Breast epithelium (tissue), 4 donors: ENCODE measurements at regions of chr17 and their contacts with region 1.

Region 1: GRCh38 chr17:16407911-16408588 is 7.3 kb upstream of the TRPV2 start:
- DNase-seq: peak in 1 of 2 donors; percentile 59
- H3K4me3 ChIP-seq: peak overlapping the region; percentile 4 to 73 (median 61)
- H3K27ac ChIP-seq: peak overlapping the region; percentile 76 to 79
- H3K4me1 ChIP-seq: no peaks in the 10 kb centered on the region
- H3K27me3 ChIP-seq: no peaks in the 10 kb centered on the region
- CTCF ChIP-seq: no peak
- POLR2A ChIP-seq: no peak

Region 2: GRCh38 chr17:16106161-16106891 is 301.7 kb before region 1 on chr17:
- intact Hi-C with region 1: no loop called
- DNase-seq: no peak
- H3K4me3 ChIP-seq: no peak overlapping the region
- H3K27ac ChIP-seq: peak overlapping the region; percentile 62 to 71
- H3K4me1 ChIP-seq: no peaks in the 10 kb centered on the region
- H3K27me3 ChIP-seq: no peaks in the 10 kb centered on the region
- CTCF ChIP-seq: no peak
- POLR2A ChIP-seq: no peak

Region 3: DNA sequence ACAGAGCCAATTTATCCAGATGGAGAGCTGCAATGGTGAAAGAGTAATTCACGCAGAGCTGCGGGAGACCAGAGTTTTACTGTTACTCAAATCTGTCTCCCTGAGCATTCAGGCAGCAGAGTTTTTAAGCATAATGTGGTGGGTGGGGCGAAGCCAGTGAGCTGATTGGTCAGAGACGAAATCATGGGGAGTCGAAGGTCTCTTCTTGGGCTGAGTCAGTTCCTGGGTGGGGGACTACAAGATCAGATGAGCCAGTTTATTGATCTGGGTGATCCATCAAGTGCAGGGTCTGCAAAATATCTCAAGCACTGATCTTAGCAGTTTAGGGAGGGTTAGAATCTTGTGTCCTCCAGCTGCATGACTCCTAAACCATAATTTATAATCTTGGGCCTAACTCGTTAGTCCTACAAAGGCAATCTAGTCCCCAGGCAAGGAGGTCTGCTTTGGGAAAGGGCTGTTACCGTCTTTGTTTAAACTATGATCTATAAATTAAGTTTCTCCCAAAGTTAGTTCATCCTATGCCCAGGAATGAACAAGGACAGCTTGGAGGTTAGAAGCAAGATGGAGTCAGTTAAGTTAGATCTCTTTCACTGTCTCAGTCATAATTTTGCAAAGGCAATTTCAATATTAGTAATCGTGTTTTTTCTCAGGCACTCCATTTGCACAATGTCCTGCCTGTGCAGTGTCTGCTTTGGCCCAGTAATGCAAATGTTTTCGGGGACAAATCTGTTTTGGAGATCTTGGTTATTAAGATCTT is 164.1 kb before region 1 on chr17:
- intact Hi-C with region 1: no loop called
- DNase-seq: no peak
- H3K4me3 ChIP-seq: no peak overlapping the region
- H3K27ac ChIP-seq: no peak overlapping the region
- H3K4me1 ChIP-seq: no peaks in the 10 kb centered on the region
- H3K27me3 ChIP-seq: no peaks in the 10 kb centered on the region
- CTCF ChIP-seq: no peak
- POLR2A ChIP-seq: no peak

Region 4: GRCh38 chr17:16342979-16343378 is 65.1 kb before region 1 on chr17:
- intact Hi-C with region 1: no loop called
- DNase-seq: no peak
- H3K4me3 ChIP-seq: no peak overlapping the region
- H3K27ac ChIP-seq: no peak overlapping the region
- H3K4me1 ChIP-seq: no peaks in the 10 kb centered on the region
- H3K27me3 ChIP-seq: no peaks in the 10 kb centered on the region
- CTCF ChIP-seq: no peak
- POLR2A ChIP-seq: no peak

Region 5: DNA sequence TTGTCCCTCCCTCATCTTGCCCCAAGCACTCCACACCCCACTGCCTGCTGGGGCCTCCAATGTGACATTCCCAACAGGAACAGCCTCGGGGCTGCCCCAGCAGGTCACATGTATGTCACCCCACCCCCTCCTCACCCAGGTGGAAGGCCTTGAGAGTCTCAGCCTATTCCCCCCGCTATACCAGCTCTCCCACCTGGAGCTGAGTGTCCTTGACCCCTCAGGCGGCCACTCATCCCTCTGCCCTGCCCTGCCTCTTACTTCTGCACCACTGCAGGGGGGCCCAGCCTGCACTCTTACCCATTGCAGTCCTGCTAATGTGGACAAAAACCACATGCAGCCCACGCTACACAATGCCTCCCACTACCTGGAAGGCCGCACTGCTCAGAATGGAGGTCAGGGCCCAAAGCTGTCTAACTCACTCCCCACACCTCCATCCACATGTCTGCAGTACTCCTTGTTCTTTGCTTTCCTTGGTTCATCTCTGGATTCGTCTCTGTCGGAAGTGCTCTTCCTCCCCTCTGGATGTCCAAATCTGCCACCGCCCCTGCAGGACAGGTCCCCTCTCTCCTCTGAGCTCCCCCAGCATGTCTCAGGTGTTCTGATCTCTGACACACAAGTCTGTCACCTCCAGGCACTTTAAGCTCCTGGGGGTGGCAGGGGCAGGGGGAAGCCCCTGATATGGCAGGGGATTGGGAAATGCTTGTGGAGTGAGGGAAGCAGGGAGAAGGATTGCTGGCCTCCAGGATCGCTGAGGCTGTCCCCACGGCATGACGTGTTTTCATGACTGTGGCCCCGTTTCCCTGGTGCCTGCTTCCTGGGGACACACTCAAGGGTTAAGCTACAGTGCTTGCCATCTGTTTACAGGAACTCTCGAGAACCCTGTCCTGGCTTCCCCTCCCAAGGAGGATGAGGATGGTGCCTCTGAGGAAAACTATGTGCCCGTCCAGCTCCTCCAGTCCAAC is 28.2 kb after region 1 on chr17:
- intact Hi-C with region 1: loop called (anchors 2 kb)
- DNase-seq: no peak
- H3K4me3 ChIP-seq: no peak overlapping the region
- H3K27ac ChIP-seq: no peak overlapping the region
- H3K4me1 ChIP-seq: peaks cover 0 to 6% of the 10 kb centered on the region in 2 donors
- H3K27me3 ChIP-seq: no peaks in the 10 kb centered on the region
- CTCF ChIP-seq: no peak
- POLR2A ChIP-seq: no peak